ENCODE measurements at regions of chr5 and their contacts with region 1.

Region 1: DNA sequence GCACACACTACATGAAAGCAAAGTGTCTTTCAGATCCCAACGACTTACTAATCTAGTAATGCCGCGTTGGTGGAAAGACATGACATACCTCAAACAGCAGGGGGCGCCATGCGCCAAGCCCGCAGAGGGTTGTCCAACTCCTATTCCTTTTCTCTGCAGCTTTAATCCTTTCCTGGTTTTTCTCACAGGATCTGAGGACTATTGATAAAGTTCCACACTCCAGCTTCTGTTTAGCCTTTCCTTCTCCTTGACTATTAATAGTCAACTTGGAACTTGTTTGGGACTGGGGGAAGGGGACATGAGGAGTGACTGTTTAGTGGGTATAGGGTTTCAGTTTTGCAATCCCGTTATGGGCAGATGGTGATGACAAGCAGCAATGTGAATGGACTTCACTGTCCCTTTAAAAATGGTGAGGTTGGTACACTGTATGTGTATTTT is 62.9 kb downstream of the OTULIN start:
- DNase-seq: peak; percentile 54 to 91
- H3K4me3 ChIP-seq: no peak overlapping the region
- H3K27ac ChIP-seq: no peak overlapping the region
- H3K4me1 ChIP-seq: no peaks in the 10 kb centered on the region
- H3K27me3 ChIP-seq: peaks cover 22% of the 10 kb centered on the region; the same call in 1 of the 2 replicates
- CTCF ChIP-seq: peak; percentile 97

Region 2: GRCh38 chr5:14581333-14581890 is 146.0 kb before region 1 on chr5 and contains the start of gene OTULINL:
- CTCF ChIA-PET with region 1: interaction called, 3 read pairs
- POLR2A ChIA-PET with region 1: no interaction called
- intact Hi-C with region 1: loop called (anchors 5 kb)
- DNase-seq: peak; percentile 48 to 93
- H3K4me3 ChIP-seq: peak within 1 kb of the TSS; percentile 75
- H3K27ac ChIP-seq: no peak within 1 kb of the TSS
- H3K4me1 ChIP-seq: 0 out of 2 replicates have a peak, but pooled peaks cover 6% of the 10 kb centered on the region
- H3K27me3 ChIP-seq: peaks cover 36% of the 10 kb centered on the region
- CTCF ChIP-seq: no peak
- total RNA-seq, gene OTULINL: 4.1 and 7.1 TPM in 2 replicates

Region 3: GRCh38 chr5:14685757-14686156 is 41.7 kb before region 1 on chr5:
- CTCF ChIA-PET with region 1: interaction called, 11 read pairs
- POLR2A ChIA-PET with region 1: no interaction called
- intact Hi-C with region 1: loop called (anchors 1 kb)
- DNase-seq: peak; percentile 39 to 54
- H3K4me3 ChIP-seq: no peak overlapping the region
- H3K27ac ChIP-seq: no peak overlapping the region
- H3K4me1 ChIP-seq: no peaks in the 10 kb centered on the region
- H3K27me3 ChIP-seq: no peaks in the 10 kb centered on the region
- CTCF ChIP-seq: peak; percentile 85

Region 4: GRCh38 chr5:14871210-14872069 is 144.0 kb after region 1 on chr5 and contains the start of gene ANKH:
- CTCF ChIA-PET with region 1: interaction called, 8 read pairs
- POLR2A ChIA-PET with region 1: no interaction called
- intact Hi-C with region 1: loop called (anchors 1 kb)
- DNase-seq: peak; percentile 41 to 96
- H3K4me3 ChIP-seq: peak within 1 kb of the TSS; percentile 60
- H3K27ac ChIP-seq: no peak within 1 kb of the TSS
- H3K4me1 ChIP-seq: peaks cover 7% of the 10 kb centered on the region; the same call in 1 of the 2 replicates
- H3K27me3 ChIP-seq: no peaks in the 10 kb centered on the region
- CTCF ChIP-seq: no peak
- total RNA-seq, gene ANKH: 81.4 and 87.2 TPM in 2 replicates

Region 5: DNA sequence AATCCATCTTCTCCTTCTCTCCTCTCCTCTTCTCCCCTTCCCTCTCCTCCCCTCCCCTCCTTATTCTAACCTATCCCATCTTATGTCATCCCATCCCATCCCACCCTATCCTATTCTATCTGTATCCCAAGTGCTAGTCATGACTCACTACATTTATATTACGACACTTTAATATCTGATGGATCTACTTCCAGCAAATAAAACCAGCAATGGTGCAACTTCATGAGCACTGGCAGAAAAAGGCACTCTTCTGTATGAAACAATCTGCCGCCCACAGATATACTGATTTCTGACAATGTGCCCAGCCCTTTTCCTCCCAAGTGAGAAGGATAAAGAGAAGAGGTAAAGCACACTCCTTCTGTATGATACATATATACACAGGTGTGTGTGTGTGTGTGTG is 230.7 kb after region 1 on chr5:
- CTCF ChIA-PET with region 1: no interaction called
- POLR2A ChIA-PET with region 1: no interaction called
- intact Hi-C with region 1: loop called (anchors 1 kb)
- DNase-seq: no peak
- H3K4me3 ChIP-seq: no peak overlapping the region
- H3K27ac ChIP-seq: no peak overlapping the region
- H3K4me1 ChIP-seq: peaks cover 8% of the 10 kb centered on the region; the same call in 1 of the 2 replicates
- H3K27me3 ChIP-seq: peaks cover 4% of the 10 kb centered on the region
- CTCF ChIP-seq: no peak

Measured in PC-9 (cell line).